Adrenal gland (tissue), 19 donors: ENCODE measurements at regions of chr6 and their contacts with region 1.

Region 1: DNA sequence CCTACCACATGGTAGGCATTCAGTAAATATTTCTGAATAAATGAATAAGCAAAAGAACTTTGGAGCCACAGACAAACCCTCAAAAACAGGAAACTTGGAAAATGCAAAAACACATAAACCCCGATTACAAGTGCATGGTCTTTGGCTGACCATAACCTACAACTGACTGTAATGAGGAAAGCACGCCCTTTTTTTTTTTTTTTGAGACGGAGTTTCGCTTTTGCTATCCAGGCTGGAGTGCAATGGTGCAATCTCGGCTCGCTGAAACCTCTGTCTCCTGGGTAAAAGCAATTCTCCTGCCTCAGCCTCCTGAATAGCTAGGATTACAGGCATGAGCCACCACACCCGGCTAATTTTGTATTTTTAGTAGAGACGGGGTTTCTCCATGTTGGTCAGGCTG is 11.9 kb upstream of the LATS1 start:
- DNase-seq: no peak
- H3K4me3 ChIP-seq: no peak overlapping the region
- H3K27ac ChIP-seq: no peak overlapping the region
- H3K4me1 ChIP-seq: no peaks in the 10 kb centered on the region
- H3K27me3 ChIP-seq: no peaks in the 10 kb centered on the region
- CTCF ChIP-seq: no peak
- POLR2A ChIP-seq: no peak

Region 2: DNA sequence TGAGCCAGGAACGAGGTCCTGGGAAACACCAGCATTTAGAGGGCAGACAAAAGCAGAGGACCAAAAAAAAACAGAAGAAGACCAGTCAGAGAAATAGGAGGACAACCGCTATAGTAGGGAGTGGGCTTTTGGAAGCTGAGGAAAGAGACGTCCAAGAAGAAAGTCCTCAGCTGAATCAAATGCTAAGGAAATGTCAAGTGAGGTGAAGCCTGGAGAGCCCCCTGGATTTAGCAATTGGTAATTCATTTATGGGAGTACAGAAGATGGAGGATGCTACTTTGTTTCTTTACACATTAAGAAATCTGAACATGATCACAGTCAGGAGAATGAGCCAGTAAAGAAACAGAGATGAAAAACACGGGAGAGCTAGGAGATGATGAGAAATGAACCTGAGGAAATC is 93.2 kb after region 1 on chr6:
- intact Hi-C with region 1: loop called in 1 of 2 experiments (anchors 10 kb)
- DNase-seq: no peak
- H3K4me3 ChIP-seq: no peak overlapping the region
- H3K27ac ChIP-seq: no peak overlapping the region
- H3K4me1 ChIP-seq: no peaks in the 10 kb centered on the region
- H3K27me3 ChIP-seq: no peaks in the 10 kb centered on the region
- CTCF ChIP-seq: no peak
- POLR2A ChIP-seq: no peak